ENCODE measurements at regions of chr11 and their contacts with region 1.

Region 1: DNA sequence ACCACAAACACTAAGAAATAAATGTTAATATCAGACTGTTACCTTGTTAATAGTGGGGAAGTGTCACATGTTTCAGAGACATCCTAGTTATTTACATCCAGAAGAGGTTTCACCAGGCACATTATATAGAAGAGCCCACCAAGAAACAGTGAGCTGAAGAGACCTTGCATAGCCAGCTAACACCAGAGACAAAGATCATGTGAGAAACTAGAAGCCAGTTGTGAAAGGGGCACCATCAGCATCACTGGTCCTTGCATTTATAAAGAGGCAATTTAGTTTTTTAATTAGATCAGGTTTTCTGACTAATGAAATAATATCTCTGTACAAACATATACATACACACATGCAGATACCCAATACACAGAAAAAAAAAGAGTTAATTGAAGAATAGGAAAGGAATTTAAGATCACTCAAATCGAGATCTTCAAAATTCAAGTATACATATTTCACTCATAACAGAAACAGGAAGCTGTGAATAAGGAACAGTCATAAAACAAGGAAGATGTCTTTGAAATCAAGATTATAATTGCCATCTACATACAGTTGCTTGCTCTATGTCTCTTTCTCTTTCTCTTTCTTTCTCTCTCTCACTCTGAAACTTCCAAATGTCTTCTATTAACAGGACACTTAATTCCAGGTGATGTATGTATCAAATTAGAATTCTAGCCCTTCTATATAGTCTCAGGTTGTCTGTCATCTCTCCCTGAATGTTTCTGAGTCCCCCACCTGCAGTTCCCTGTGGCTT is 348.7 kb downstream of the ETS1 start:
- DNase-seq: peak; percentile 33
- H3K4me3 ChIP-seq: no peak overlapping the region
- H3K27ac ChIP-seq: peak overlapping the region; percentile 60
- H3K4me1 ChIP-seq: peaks cover 34% of the 10 kb centered on the region
- H3K27me3 ChIP-seq: no peaks in the 10 kb centered on the region
- CTCF ChIP-seq: no peak
- POLR2A ChIP-seq: no peak

Region 2: DNA sequence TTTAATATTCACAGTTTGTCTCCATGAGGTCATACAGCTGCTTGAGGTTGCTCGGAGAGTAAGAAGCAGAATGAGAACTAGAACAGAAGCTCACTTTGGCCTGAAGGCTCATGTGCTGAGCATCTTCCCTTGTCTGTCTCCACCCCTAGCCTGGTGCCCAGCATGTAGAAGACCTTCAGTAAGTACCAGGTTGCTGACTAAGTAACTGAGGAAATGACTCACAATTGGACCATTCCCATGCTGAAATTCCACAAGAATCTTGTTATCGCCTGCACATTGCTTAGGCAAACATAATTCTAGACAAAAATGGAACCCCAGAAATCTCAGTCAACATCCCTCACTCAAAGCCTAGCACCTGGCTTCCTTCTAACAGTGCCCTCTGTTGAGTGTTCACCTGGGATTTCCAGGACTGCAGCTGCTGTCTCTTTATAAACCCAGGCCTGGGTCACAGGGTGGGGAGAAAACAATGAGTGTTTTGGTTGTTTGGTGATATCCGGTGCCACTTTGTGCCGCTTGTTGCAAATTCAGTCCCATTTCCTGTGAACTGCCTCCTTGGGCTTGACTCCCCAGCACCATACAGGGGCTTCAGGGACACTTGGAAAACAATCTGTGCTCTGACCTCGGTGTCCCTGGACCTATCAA is 58.1 kb before region 1 on chr11:
- CTCF ChIA-PET with region 1: no interaction called
- POLR2A ChIA-PET with region 1: no interaction called
- dilution Hi-C with region 1: no loop called
- intact Hi-C with region 1: loop called (anchors 1 kb)
- DNase-seq: peak; percentile 93
- H3K4me3 ChIP-seq: no peak overlapping the region
- H3K27ac ChIP-seq: peak overlapping the region; percentile 97
- H3K4me1 ChIP-seq: peaks cover 19% of the 10 kb centered on the region
- H3K27me3 ChIP-seq: no peaks in the 10 kb centered on the region
- CTCF ChIP-seq: no peak
- POLR2A ChIP-seq: no peak

Region 3: GRCh38 chr11:128222245-128222884 is 16.3 kb before region 1 on chr11:
- CTCF ChIA-PET with region 1: interaction called, 4 read pairs
- POLR2A ChIA-PET with region 1: interaction called, 5 read pairs
- dilution Hi-C with region 1: no loop called
- intact Hi-C with region 1: loop called (anchors 2 kb)
- DNase-seq: peak; percentile 39
- H3K4me3 ChIP-seq: no peak overlapping the region
- H3K27ac ChIP-seq: no peak overlapping the region
- H3K4me1 ChIP-seq: no peaks in the 10 kb centered on the region
- H3K27me3 ChIP-seq: no peaks in the 10 kb centered on the region
- CTCF ChIP-seq: no peak
- POLR2A ChIP-seq: no peak